Tibial artery (tissue), 4 donors: ENCODE measurements at regions of chr1 and their contacts with region 1.

Region 1: GRCh38 chr1:59759156-59759925 is 55.4 kb upstream of the HOOK1 start:
- DNase-seq: peak; percentile 85 to 91
- H3K4me3 ChIP-seq: peak overlapping the region; percentile 26 to 30
- H3K27ac ChIP-seq: peak overlapping the region; percentile 10 to 52
- H3K4me1 ChIP-seq: peaks cover 0 to 6% (median 4%) of the 10 kb centered on the region in 4 donors
- H3K27me3 ChIP-seq: no peaks in the 10 kb centered on the region
- CTCF ChIP-seq: peak; percentile 96 to 98

Region 2: DNA sequence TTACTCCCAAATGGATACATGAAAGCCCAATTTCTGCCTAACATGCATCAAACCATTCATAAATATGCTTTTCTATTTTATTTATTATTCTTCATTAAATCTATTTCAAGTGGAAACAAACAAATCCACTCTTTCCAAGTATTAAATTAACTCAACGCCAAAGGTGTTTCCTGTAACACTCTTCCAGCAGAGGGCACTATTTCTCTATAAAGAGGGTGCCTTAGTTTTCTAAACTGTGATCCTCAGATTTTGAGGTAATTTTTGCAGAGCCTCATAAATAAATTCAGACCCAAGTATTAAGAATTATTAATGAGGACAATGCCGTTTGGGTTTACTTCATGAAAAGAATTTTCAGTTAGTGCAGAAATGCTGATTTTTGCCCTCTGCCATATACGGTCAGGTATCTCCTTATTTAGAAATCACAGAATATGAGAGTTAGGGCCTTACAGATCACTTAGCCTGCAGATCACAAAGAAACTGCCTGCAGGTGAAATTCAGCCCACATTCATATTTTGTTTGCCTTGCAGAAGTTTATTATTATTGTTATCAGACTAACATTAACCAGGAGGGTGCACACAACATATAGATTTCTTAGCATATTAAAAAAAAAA is 1019.4 kb before region 1 on chr1:
- intact Hi-C with region 1: loop called (anchors 2 kb)
- DNase-seq: no peak
- H3K4me3 ChIP-seq: no peak overlapping the region
- H3K27ac ChIP-seq: no peak overlapping the region
- H3K4me1 ChIP-seq: no peaks in the 10 kb centered on the region
- H3K27me3 ChIP-seq: no peaks in the 10 kb centered on the region
- CTCF ChIP-seq: peak; percentile 76 to 89